H1 (cell line): ENCODE measurements at regions of chr13 and their contacts with region 1.

Region 1: DNA sequence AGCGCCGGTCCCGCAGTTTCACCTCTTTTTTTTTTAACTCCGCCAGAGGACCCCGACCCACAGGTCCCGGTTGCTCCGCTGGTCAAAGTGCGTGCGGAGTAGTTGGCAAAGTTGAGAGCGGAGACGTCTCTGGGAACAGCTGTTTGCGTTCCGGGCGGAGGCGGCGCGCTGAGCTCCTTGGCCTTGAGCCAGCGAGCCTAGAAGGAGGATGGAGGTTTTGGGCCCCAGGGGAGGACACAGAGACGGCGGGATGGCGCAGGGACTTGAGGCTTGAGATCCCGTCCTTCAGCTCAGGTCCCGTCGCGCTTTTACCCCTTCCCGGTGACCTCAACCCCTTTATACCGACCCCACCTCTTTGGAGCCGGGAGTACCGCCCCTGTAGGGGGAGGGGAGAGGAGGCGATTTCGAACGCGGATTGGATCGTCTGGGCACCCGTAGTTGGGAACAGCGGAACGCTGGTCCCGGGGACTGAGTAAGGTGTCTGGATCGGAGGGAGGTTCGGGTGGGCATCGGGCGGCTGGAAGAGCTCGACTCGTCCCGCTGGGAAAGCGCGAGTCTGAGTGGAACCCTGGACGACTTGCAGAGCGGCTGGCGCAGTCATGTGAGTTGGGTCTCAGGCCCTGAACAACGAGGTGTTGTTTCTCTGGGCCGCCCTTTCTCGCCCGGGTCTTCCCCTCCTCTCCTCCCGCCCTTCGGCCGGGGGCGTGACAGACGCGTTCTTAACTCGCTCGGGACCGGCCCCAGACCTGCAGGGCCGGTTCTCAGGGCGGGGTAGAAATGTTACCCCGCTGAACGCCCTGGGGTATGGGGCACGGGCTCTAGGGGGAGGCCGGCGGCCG is at the start of gene WBP4:
- DNase-seq: peak; percentile 90 to 99
- H3K4me3 ChIP-seq: peak within 1 kb of the TSS; percentile 89 to 96 (median 95)
- H3K27ac ChIP-seq: peak within 1 kb of the TSS; percentile 93
- H3K4me1 ChIP-seq: peaks cover 0 to 3% (median 2%) of the 10 kb centered on the region in 4 experiments; a peak in 2 of 7 replicates
- H3K27me3 ChIP-seq: no peaks in the 10 kb centered on the region
- CTCF ChIP-seq: no peak
- EP300 ChIP-seq: peak; percentile 73 to 83; a peak in 2 of 3 replicates
- POLR2A ChIP-seq: peak; percentile 95
- RAD21 ChIP-seq: no peak
- total RNA-seq, gene WBP4: 10.0 and 10.5 TPM in 2 replicates

Region 2: GRCh38 chr13:40910324-40911050 is 150.8 kb before region 1 on chr13:
- CTCF ChIA-PET with region 1: no interaction called
- POLR2A ChIA-PET with region 1: no interaction called
- DNase-seq: no peak
- H3K4me3 ChIP-seq: no peak overlapping the region
- H3K27ac ChIP-seq: no peak overlapping the region
- H3K4me1 ChIP-seq: no peaks in the 10 kb centered on the region
- H3K27me3 ChIP-seq: no peaks in the 10 kb centered on the region
- CTCF ChIP-seq: no peak
- EP300 ChIP-seq: no peak
- POLR2A ChIP-seq: no peak
- RAD21 ChIP-seq: no peak

Region 3: GRCh38 chr13:40922437-40923040 is 138.8 kb before region 1 on chr13:
- CTCF ChIA-PET with region 1: no interaction called
- POLR2A ChIA-PET with region 1: interaction called, 12 read pairs
- DNase-seq: peak in 1 of 2 experiments; percentile 49
- H3K4me3 ChIP-seq: no peak overlapping the region
- H3K27ac ChIP-seq: no peak overlapping the region
- H3K4me1 ChIP-seq: no peaks in the 10 kb centered on the region; a peak in 2 of 7 replicates
- H3K27me3 ChIP-seq: no peaks in the 10 kb centered on the region
- CTCF ChIP-seq: no peak
- EP300 ChIP-seq: no peak
- POLR2A ChIP-seq: no peak
- RAD21 ChIP-seq: no peak

Region 4: DNA sequence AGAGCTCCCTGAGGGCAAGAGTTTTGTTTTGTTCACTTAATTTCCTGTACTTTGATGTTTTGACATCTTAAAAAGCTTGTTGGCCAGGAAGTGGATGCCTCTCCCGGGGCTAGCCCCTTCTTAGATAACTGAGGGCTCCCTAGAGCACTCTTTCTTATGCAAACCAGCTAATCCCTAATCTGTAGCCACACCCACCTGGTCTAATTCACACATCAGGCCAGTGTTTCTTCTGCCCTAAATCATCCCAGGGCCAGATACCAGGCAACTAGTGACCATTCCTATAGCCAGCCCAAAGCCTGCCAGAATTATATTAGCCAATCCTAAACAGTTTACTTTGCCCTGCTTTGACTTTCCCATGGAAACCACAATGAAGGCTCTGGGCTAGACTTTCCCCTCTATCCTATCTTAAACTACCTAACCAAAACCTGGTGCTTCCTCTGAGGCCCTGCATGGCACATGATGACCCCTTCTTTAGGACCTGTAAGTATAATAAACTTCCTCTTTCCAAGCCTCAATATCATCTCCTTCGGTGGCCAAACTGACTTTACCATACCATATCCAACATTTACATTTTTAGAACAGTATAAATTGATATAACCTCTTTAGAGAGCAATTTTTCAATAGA is 24.8 kb after region 1 on chr13:
- CTCF ChIA-PET with region 1: no interaction called
- POLR2A ChIA-PET with region 1: interaction called, 12 read pairs
- DNase-seq: peak in 1 of 2 experiments; percentile 53
- H3K4me3 ChIP-seq: no peak overlapping the region
- H3K27ac ChIP-seq: no peak overlapping the region
- H3K4me1 ChIP-seq: peaks cover 0 to 4% (median 4%) of the 10 kb centered on the region in 4 experiments; a peak in 3 of 7 replicates
- H3K27me3 ChIP-seq: no peaks in the 10 kb centered on the region
- CTCF ChIP-seq: no peak
- EP300 ChIP-seq: no peak
- POLR2A ChIP-seq: no peak
- RAD21 ChIP-seq: no peak

Region 5: GRCh38 chr13:41263261-41264027 is 202.2 kb after region 1 on chr13 and contains the start of gene MTRF1:
- CTCF ChIA-PET with region 1: no interaction called
- POLR2A ChIA-PET with region 1: interaction called, 11 read pairs
- DNase-seq: peak; percentile 21 to 82
- H3K4me3 ChIP-seq: peak within 1 kb of the TSS; percentile 55 to 86 (median 72)
- H3K27ac ChIP-seq: peak within 1 kb of the TSS; percentile 21; the same call in 1 of the 2 replicates
- H3K4me1 ChIP-seq: no peaks in the 10 kb centered on the region
- H3K27me3 ChIP-seq: no peaks in the 10 kb centered on the region
- CTCF ChIP-seq: no peak
- EP300 ChIP-seq: no peak
- POLR2A ChIP-seq: peak in 1 of 2 experiments; percentile 71; a peak in 2 of 3 replicates
- RAD21 ChIP-seq: no peak
- total RNA-seq, gene MTRF1: 14.1 and 19.2 TPM in 2 replicates